RWPE1 (cell line): ENCODE measurements at regions of chr10 and their contacts with region 1.

Region 1: DNA sequence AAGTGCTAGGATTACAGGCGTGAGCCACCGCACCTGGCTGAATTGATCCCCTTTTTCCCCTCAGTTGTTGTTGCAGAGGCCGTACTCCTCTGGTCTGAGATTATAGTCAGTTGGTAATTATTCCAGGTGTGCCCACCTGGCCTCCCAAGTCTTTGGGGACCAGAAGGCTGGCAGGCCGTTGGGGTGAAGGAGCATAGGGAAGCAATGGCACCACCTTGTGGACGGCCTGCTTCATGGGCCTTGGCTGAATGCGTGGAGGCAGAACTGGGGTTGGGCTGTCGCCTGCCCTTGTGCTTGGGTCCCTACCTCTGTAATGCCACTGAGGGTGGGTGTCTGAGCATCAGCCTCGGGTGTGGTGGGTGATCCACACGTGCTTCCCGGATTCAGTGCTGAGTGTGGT is 125.7 kb downstream of the RGS10 start:
- DNase-seq: peak; percentile 87
- H3K27ac ChIP-seq: no peak overlapping the region
- CTCF ChIP-seq: peak; percentile 71

Region 2: GRCh38 chr10:119113751-119114732 is 302.8 kb before region 1 on chr10:
- CTCF ChIA-PET with region 1: no interaction called
- POLR2A ChIA-PET with region 1: no interaction called
- DNase-seq: peak; percentile 44
- H3K27ac ChIP-seq: peak overlapping the region; percentile 56
- CTCF ChIP-seq: no peak

Region 3: DNA sequence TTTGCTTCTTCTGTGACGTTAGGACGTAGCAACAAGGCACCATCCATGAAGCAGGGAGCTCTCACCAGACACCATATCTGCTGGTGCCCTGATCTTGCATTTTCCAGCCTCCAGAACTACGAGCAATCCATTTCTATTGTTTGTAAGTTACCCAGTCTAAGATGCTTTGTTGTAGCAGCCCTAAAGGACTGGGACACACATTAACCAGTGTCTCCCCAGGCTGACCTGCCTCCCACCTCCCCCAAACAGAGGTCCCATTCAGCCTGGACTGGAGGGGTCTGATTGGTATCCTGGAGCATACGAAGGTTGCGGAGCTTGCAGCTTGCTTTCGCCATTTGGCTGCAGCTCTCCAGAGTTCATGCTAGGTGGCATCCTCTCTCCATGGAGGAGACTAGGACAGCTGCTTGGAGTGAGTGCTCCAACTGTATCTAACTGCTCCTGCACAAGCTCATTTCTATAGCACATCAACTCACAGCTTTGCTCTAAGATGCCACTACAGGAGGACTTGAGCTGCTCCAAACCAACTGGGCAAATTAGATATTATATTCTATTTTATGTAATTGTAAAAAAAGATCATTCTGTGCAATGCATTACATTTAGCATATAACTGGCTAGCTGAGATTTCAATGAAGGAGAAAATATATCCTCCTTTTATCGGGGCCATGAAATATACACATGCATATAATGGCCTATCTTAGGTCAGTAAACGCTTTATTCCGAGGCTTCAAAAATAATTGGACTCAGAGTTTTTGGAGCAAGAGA is 217.4 kb before region 1 on chr10:
- CTCF ChIA-PET with region 1: interaction called, 14 read pairs
- POLR2A ChIA-PET with region 1: no interaction called
- DNase-seq: peak; percentile 64
- H3K27ac ChIP-seq: no peak overlapping the region
- CTCF ChIP-seq: peak; percentile 78